ENCODE measurements at regions of chr4 and their contacts with region 1.

Region 1: GRCh38 chr4:38782452-38783108 is at the start of gene TLR10:
- DNase-seq: peak; percentile 37
- ATAC-seq: peak; percentile 63
- H3K4me3 Mint-ChIP-seq: no peak within 1 kb of the TSS
- H3K27ac Mint-ChIP-seq: no peak within 1 kb of the TSS
- H3K4me1 Mint-ChIP-seq: peaks cover 5% of the 10 kb centered on the region
- H3K27me3 Mint-ChIP-seq: no peaks in the 10 kb centered on the region
- total RNA-seq, gene TLR10: not detected

Region 2: GRCh38 chr4:37970487-37971101 is 812.0 kb before region 1 on chr4:
- CTCF ChIA-PET with region 1: no interaction called
- POLR2A ChIA-PET with region 1: no interaction called
- intact Hi-C with region 1: no loop called
- DNase-seq: peak; percentile 74
- ATAC-seq: peak; percentile 86
- H3K4me3 Mint-ChIP-seq: no peak overlapping the region
- H3K27ac Mint-ChIP-seq: no peak overlapping the region
- H3K4me1 Mint-ChIP-seq: peaks cover 20% of the 10 kb centered on the region
- H3K27me3 Mint-ChIP-seq: no peaks in the 10 kb centered on the region

Region 3: GRCh38 chr4:38062088-38062893 is 720.3 kb before region 1 on chr4:
- CTCF ChIA-PET with region 1: no interaction called
- POLR2A ChIA-PET with region 1: no interaction called
- intact Hi-C with region 1: loop called in 1 of 2 experiments (anchors 2 kb)
- DNase-seq: peak; percentile 82
- ATAC-seq: peak; percentile 79
- H3K4me3 Mint-ChIP-seq: peak overlapping the region; percentile 75
- H3K27ac Mint-ChIP-seq: peak overlapping the region; percentile 87
- H3K4me1 Mint-ChIP-seq: peaks cover 14% of the 10 kb centered on the region
- H3K27me3 Mint-ChIP-seq: no peaks in the 10 kb centered on the region

Region 4: DNA sequence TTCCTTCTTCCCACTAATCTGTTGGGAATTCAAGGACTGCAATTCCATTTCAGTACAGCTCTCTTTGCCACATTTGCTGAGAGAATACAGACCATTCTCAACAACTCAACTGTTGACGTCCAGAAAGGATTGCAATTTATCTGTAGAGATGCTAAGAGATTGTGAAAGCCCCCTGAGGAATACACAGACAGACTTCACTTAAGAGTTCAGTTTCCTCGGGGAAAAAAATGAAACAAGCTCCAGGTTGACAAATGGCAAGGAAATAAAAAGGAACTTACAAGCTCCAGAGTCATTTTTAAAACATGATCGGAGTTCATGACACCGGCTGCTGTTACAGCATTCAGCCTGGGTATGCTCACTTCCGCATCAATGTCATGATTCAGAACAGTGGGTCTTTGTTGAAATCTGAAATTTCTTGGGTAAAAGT is 13.6 kb before region 1 on chr4:
- CTCF ChIA-PET with region 1: interaction called, 37 read pairs
- POLR2A ChIA-PET with region 1: no interaction called
- intact Hi-C with region 1: no loop called
- DNase-seq: no peak
- ATAC-seq: no peak
- H3K4me3 Mint-ChIP-seq: no peak overlapping the region
- H3K27ac Mint-ChIP-seq: no peak overlapping the region
- H3K4me1 Mint-ChIP-seq: no peaks in the 10 kb centered on the region
- H3K27me3 Mint-ChIP-seq: peaks cover 2% of the 10 kb centered on the region

Measured in activated CD4-positive, alpha-beta T cell treated with anti-CD3 and anti-CD28 coated beads for 36 hours (primary cell).